Transverse colon (tissue), 4 donors: ENCODE measurements at regions of chr9 and their contacts with region 1.

Region 1: GRCh38 chr9:27870404-27870803 is 297.1 kb upstream of the C9orf72 start:
- DNase-seq: no peak
- H3K4me3 ChIP-seq: no peak overlapping the region
- H3K27ac ChIP-seq: no peak overlapping the region
- H3K4me1 ChIP-seq: no peaks in the 10 kb centered on the region
- H3K27me3 ChIP-seq: no peaks in the 10 kb centered on the region
- CTCF ChIP-seq: no peak
- EP300 ChIP-seq: no peak
- POLR2A ChIP-seq: no peak

Region 2: DNA sequence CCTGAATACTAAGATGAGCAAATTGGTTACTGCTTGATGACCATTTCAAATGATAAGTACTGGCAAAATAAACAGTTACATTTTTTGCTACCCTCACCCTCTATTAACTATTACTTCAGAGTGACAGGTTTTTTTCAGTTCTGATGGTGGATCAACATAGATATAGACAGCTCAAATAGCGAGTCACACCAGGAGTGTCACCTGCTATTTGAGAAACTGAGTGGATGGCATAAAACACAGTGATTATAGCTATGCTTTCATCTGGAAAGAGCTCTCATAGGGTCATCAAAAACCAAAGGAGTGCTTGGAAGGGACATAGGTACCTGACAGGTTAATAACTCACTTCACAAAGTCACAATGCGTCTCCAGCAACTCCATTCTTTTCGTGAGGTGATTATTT is 52.7 kb before region 1 on chr9:
- in situ Hi-C with region 1: loop called in 1 of 4 experiments (anchors 10 kb)
- intact Hi-C with region 1: no loop called
- DNase-seq: no peak
- H3K4me3 ChIP-seq: no peak overlapping the region
- H3K27ac ChIP-seq: no peak overlapping the region
- H3K4me1 ChIP-seq: no peaks in the 10 kb centered on the region
- H3K27me3 ChIP-seq: no peaks in the 10 kb centered on the region
- CTCF ChIP-seq: no peak
- EP300 ChIP-seq: no peak
- POLR2A ChIP-seq: no peak